WTC11 (cell line): ENCODE measurements at regions of chr5 and their contacts with region 1.

Region 1: DNA sequence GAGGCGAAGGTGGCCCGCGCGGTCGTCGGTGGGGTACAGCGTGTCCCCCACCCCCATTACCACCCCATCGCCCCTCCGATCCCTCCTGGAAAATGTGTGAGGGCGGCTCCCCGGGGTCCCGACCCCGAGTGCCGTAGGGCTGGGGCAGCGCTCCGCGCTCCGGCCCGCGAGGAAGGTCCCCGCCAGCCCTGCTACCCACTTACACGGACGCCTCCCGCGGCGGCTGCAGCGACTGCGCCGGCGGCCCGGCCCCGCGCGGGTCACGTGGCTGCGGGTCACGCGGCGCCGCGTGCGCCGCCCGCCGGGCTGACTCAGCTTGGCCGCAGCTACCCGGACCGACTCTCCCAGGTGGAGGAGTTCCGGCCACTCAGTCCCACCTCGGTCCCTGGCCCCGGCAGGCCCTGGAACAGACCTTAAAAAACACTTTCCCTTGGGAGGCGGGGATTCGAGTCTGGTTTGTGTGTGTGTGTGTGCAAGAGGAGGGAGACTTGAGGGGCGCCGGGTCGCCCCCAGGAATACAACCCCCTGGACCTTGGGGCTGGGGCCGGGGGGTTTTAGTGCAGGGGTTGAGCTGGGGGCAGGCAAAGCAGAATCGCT is at the start of gene GNPDA1:
- DNase-seq: peak; percentile 52
- ATAC-seq: peak; percentile 57
- H3K4me3 Mint-ChIP-seq: peak within 1 kb of the TSS; percentile 81
- H3K27ac Mint-ChIP-seq: peak within 1 kb of the TSS; percentile 86
- H3K4me1 Mint-ChIP-seq: peaks cover 9% of the 10 kb centered on the region
- H3K27me3 Mint-ChIP-seq: peaks cover 2% of the 10 kb centered on the region; the same call in 1 of the 2 replicates
- CTCF ChIP-seq: no peak
- total RNA-seq, gene GNPDA1: 54.8 to 67.3 TPM (median 62.9 TPM) in 3 replicates

Region 2: GRCh38 chr5:141935538-141935937 is 77.4 kb before region 1 on chr5:
- CTCF ChIA-PET with region 1: no interaction called
- POLR2A ChIA-PET with region 1: no interaction called
- DNase-seq: no peak
- ATAC-seq: no peak
- H3K4me3 Mint-ChIP-seq: no peak overlapping the region
- H3K27ac Mint-ChIP-seq: peak overlapping the region; percentile 75
- H3K4me1 Mint-ChIP-seq: no peaks in the 10 kb centered on the region
- H3K27me3 Mint-ChIP-seq: no peaks in the 10 kb centered on the region
- CTCF ChIP-seq: no peak

Region 3: GRCh38 chr5:141968914-141969608 is 43.8 kb before region 1 on chr5 and contains the start of gene RNF14:
- CTCF ChIA-PET with region 1: interaction called, 42 read pairs
- POLR2A ChIA-PET with region 1: interaction called, 4 read pairs
- DNase-seq: peak; percentile 95
- ATAC-seq: peak; percentile 96
- H3K4me3 Mint-ChIP-seq: peak within 1 kb of the TSS; percentile 80
- H3K27ac Mint-ChIP-seq: peak within 1 kb of the TSS; percentile 92
- H3K4me1 Mint-ChIP-seq: peaks cover 19% of the 10 kb centered on the region
- H3K27me3 Mint-ChIP-seq: no peaks in the 10 kb centered on the region
- CTCF ChIP-seq: peak; percentile 98
- total RNA-seq, gene RNF14: 17.0 to 22.6 TPM (median 20.5 TPM) in 3 replicates

Region 4: DNA sequence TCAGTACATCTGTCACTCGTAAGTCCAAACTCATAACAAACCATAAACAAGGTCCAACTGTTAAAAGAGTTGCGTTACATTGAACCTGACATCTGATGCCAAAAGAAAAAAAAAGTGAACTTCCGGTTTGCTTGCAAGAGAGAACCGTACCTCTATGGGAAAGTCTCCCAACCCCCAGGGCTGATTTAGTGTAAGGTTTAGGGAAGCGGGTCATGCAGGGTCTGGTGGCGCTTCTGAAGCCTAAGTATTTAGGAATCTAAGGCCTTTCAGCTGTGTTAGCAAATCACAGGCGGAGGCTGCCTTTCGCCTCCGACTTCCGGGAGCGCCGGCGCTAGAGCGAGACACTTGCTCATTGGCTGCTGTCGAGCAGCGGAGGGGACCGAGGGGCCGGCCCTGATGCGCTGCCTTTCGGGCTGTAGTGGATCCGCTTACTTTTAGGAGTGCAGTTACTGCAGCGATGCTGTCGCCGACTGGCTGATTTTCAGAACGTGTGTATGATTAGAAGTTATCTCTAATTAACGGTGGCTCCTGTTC is 11.9 kb after region 1 on chr5:
- CTCF ChIA-PET with region 1: interaction called, 17 read pairs
- POLR2A ChIA-PET with region 1: no interaction called
- DNase-seq: peak; percentile 88
- ATAC-seq: peak; percentile 100
- H3K4me3 Mint-ChIP-seq: peak overlapping the region; percentile 79
- H3K27ac Mint-ChIP-seq: peak overlapping the region; percentile 97
- H3K4me1 Mint-ChIP-seq: peaks cover 15% of the 10 kb centered on the region
- H3K27me3 Mint-ChIP-seq: peaks cover 5% of the 10 kb centered on the region; the same call in 1 of the 2 replicates
- CTCF ChIP-seq: no peak

Region 5: DNA sequence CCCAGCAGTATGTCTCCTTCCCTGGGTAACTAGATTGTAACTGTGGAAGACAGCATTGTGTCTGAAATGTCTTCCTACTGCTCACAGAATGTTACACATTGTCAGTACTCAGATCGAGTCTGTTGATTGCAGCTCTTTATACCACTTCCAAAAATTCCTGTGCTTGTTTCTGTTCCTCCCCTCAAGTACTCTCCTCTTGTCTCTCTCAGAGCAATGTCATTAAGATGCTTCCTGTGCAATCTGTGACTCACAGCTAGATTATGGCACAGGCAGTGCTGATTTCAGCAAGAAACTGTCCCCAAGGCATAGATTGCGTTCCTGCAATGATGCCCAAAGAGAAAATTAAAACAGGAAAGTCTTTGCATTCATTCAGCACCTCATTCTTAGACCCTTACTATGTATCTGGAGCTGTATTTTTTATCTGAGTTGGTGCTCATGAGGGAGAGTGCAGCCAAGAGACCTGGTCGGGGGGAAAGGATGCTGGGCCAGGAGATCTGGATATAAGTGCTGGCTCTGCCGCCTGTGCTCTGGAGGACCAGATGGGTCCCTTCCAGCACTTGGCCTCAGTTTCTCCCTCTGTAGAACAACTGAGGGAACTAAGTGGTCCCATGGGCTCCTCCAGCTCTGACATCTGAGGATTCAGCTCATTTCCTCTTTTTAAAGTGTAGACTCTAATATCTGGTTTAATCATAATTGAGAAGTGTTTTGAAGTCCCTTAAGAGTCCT is 40.7 kb after region 1 on chr5:
- CTCF ChIA-PET with region 1: interaction called, 17 read pairs
- POLR2A ChIA-PET with region 1: interaction called, 3 read pairs
- DNase-seq: no peak
- ATAC-seq: peak; percentile 69
- H3K4me3 Mint-ChIP-seq: no peak overlapping the region
- H3K27ac Mint-ChIP-seq: 0 out of 2 replicates have a peak overlapping the region, but pooled peaks have one; percentile 44
- H3K4me1 Mint-ChIP-seq: peaks cover 35% of the 10 kb centered on the region
- H3K27me3 Mint-ChIP-seq: 0 out of 2 replicates have a peak, but pooled peaks cover 2% of the 10 kb centered on the region
- CTCF ChIP-seq: no peak

Region 6: GRCh38 chr5:142145106-142145900 is 132.4 kb after region 1 on chr5:
- CTCF ChIA-PET with region 1: interaction called, 63 read pairs
- POLR2A ChIA-PET with region 1: interaction called, 4 read pairs
- DNase-seq: peak; percentile 70
- ATAC-seq: peak; percentile 98
- H3K4me3 Mint-ChIP-seq: no peak overlapping the region
- H3K27ac Mint-ChIP-seq: no peak overlapping the region
- H3K4me1 Mint-ChIP-seq: 0 out of 2 replicates have a peak, but pooled peaks cover 1% of the 10 kb centered on the region
- H3K27me3 Mint-ChIP-seq: no peaks in the 10 kb centered on the region
- CTCF ChIP-seq: no peak; the same call in 1 of the 2 replicates